Activated T-helper 1 cell treated with anti-CD3 and anti-CD28 coated beads, Interleukin-12 subunit alpha, Interleukin-12 subunit beta, Interleukin-2, Interleukin-4 antibody, amounts not matched to agents 30 ng/mL and 10 ng/mL and 1 ng/mL, durations not matched to agents 14 hours and 24 hours and 36 hours (primary cell): ENCODE measurements at regions of chr4 and their contacts with region 1.

Region 1: DNA sequence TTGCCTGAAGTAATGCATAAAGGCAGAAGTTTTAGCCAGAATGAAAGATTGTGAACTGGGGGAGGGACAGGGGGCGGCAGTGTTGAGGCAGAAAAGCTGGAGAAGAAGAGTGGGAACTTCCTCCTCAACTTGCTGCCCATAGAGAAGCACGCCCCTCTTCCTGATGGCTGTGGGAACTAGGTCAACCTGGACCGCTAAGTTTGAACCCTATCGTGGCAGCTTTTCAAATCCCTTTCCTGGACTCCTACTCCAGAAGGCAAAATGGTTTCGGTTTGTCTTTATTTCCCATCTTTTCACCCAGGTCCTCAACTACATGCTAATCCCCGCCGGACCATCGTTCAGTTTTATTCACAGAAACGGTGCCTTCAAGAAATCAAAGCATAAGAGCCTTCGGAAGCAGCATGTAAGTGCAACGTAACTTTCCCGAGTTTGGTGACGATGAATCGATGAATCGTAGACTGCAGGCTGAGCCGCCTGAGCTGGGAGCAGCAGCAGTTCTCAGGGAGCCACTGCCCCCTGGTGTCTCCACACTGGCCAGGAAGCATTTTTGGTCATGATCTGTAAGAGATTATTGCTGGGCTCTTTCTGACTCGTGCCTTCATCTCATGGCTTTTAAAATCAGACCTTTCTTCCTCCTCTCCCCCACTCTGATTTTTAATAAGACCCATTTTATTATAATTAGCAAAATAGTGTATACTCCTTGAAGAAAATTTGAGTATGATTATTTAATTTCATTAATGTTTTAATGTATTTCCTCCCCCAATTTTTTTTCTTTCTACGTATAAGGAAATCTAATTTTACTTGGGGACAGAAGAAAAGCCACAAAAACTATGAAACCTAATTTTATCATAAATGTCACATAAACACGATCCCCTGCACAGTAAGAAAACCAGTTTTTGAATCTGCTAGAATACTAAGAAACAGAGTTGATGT is 21.4 kb downstream of the SPINK2 start:
- DNase-seq: peak; percentile 73
- H3K4me3 Mint-ChIP-seq: peak overlapping the region; percentile 88
- H3K27ac Mint-ChIP-seq: peak overlapping the region; percentile 49
- H3K4me1 Mint-ChIP-seq: peaks cover 30% of the 10 kb centered on the region
- H3K27me3 Mint-ChIP-seq: peaks cover 13% of the 10 kb centered on the region

Region 2: DNA sequence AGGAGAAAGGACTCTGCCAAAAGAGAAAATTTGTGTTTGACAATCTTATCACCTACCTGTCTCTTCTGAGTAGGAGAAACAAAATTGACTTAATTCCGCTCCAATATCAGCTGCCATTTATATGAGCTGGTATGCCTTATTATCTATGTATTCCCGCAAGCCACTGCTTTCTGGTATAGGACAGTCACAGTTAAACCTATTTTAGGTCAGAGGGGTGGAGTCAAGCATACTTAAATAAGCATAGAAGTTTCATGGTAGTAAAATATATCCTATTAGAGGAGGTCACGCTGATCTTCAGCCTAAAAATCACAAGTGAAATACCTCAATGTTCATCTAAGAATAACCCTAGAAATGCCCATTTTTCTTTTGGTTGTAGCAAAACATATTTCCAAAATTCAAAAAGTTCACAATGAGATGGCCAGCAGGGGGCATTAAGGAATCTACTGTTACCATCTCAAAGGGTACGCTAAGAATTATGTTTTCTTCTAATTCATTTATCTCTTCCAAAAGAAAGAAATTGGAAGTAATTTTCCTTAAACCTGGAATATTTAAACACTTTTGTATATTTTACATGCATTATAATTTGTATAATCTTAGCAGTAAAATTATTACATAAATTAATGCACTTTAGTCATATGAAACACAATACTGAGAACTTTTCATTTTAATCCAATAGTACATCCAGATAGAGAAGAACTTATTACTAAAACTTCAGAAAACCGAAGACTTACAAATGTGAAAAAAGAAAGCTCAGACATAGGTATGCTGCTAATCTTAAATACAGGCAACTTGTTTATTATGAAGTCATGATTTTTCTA is 375.2 kb before region 1 on chr4:
- intact Hi-C with region 1: loop called (anchors 1 kb)
- DNase-seq: no peak
- H3K4me3 Mint-ChIP-seq: no peak overlapping the region
- H3K27ac Mint-ChIP-seq: no peak overlapping the region
- H3K4me1 Mint-ChIP-seq: peaks cover 34% of the 10 kb centered on the region
- H3K27me3 Mint-ChIP-seq: no peaks in the 10 kb centered on the region

Region 3: GRCh38 chr4:56530269-56531148 is 269.6 kb before region 1 on chr4:
- intact Hi-C with region 1: loop called (anchors 1 kb)
- DNase-seq: peak; percentile 63
- H3K4me3 Mint-ChIP-seq: peak overlapping the region; percentile 57
- H3K27ac Mint-ChIP-seq: no peak overlapping the region
- H3K4me1 Mint-ChIP-seq: no peaks in the 10 kb centered on the region
- H3K27me3 Mint-ChIP-seq: peaks cover 18% of the 10 kb centered on the region

Region 4: DNA sequence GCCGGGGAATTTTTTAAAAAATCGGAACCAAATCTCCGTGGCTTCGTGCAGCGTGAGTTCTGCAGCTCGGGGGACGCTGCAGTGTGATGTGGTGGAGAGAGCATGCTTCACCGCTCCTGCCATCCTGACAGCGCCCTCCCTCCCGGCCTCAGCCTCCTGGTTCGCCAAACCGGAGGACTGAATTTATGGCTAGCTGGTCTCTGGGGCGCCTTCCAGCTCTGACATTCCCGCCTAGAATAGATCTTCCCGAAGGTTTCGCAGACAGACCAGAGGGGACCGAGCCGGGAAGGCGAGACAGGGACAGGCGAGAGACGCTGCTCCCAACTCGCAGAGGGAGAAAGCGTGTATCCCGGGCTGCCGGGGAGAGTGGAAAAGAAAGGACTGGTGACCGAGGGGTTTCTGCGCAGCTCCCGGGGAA is 144.9 kb before region 1 on chr4:
- intact Hi-C with region 1: loop called (anchors 1 kb)
- DNase-seq: no peak
- H3K4me3 Mint-ChIP-seq: peak overlapping the region; percentile 87
- H3K27ac Mint-ChIP-seq: peak overlapping the region; percentile 85
- H3K4me1 Mint-ChIP-seq: peaks cover 68% of the 10 kb centered on the region
- H3K27me3 Mint-ChIP-seq: peaks cover 23% of the 10 kb centered on the region

Region 5: GRCh38 chr4:56723201-56723605 is 76.9 kb before region 1 on chr4:
- intact Hi-C with region 1: loop called (anchors 2 kb)
- DNase-seq: peak; percentile 8
- H3K4me3 Mint-ChIP-seq: no peak overlapping the region
- H3K27ac Mint-ChIP-seq: peak overlapping the region; percentile 11
- H3K4me1 Mint-ChIP-seq: peaks cover 24% of the 10 kb centered on the region
- H3K27me3 Mint-ChIP-seq: no peaks in the 10 kb centered on the region

Region 6: GRCh38 chr4:56786955-56787354 is 13.1 kb before region 1 on chr4:
- intact Hi-C with region 1: no loop called
- DNase-seq: no peak
- H3K4me3 Mint-ChIP-seq: no peak overlapping the region
- H3K27ac Mint-ChIP-seq: no peak overlapping the region
- H3K4me1 Mint-ChIP-seq: no peaks in the 10 kb centered on the region
- H3K27me3 Mint-ChIP-seq: peaks cover 3% of the 10 kb centered on the region

Region 7: GRCh38 chr4:56977321-56978012 is 177.4 kb after region 1 on chr4 and contains the start of gene NOA1:
- intact Hi-C with region 1: loop called (anchors 5 kb)
- DNase-seq: peak; percentile 98
- H3K4me3 Mint-ChIP-seq: peak within 1 kb of the TSS; percentile 100
- H3K27ac Mint-ChIP-seq: peak within 1 kb of the TSS; percentile 100
- H3K4me1 Mint-ChIP-seq: peaks cover 51% of the 10 kb centered on the region
- H3K27me3 Mint-ChIP-seq: no peaks in the 10 kb centered on the region
- total RNA-seq, gene NOA1: 17.7 and 18.3 TPM in 2 replicates